ENCODE measurements at regions of chr6 and their contacts with region 1.

Region 1: DNA sequence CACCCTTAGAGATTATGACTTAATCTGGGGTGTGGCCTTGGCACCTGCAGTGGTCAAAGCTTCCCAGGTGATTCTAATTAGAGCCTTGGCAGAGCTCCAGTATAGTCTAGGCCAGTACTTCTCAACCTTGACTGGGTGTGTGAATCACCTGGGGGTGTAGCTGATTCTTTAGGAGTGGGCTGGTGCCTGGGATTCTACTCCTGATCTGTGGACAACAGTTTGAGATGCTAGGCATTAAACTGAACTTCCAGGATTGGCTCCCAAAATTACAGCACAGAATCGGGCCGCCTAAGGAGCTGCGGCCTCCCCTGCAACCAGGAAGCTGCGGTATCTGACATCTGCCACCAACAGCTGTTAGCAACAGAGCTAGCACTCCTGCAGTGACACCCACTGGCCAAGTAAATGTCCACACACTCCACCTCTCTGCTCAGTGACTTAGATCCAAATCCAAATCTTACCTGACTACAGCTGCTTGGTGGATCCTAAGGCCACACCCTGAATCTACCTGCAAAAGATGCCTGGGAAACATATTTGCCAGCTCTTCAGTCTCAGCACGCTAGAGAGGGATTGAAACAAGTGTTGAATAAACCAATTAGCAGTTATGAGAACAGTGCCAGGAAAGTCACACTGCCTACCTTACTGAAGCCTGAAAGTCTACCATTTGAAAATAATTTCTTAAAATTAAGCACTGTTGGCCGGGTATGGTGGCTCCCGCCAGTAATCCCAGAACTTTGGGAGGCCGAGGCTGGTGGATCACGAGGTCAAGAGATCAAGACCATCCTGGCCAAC is 126.7 kb downstream of the UNC5CL start:
- DNase-seq: peak in 1 of 2 experiments; percentile 17
- H3K4me3 ChIP-seq: no peak overlapping the region
- H3K27ac ChIP-seq: no peak overlapping the region
- H3K4me1 ChIP-seq: no peaks in the 10 kb centered on the region
- H3K27me3 ChIP-seq: peaks cover 0 to 1% (median 0%) of the 10 kb centered on the region in 4 experiments; a peak in 2 of 7 replicates
- CTCF ChIP-seq: peak; percentile 61 to 78 (median 67)
- EP300 ChIP-seq: no peak
- POLR2A ChIP-seq: no peak
- RAD21 ChIP-seq: peak; percentile 63 to 78

Region 2: DNA sequence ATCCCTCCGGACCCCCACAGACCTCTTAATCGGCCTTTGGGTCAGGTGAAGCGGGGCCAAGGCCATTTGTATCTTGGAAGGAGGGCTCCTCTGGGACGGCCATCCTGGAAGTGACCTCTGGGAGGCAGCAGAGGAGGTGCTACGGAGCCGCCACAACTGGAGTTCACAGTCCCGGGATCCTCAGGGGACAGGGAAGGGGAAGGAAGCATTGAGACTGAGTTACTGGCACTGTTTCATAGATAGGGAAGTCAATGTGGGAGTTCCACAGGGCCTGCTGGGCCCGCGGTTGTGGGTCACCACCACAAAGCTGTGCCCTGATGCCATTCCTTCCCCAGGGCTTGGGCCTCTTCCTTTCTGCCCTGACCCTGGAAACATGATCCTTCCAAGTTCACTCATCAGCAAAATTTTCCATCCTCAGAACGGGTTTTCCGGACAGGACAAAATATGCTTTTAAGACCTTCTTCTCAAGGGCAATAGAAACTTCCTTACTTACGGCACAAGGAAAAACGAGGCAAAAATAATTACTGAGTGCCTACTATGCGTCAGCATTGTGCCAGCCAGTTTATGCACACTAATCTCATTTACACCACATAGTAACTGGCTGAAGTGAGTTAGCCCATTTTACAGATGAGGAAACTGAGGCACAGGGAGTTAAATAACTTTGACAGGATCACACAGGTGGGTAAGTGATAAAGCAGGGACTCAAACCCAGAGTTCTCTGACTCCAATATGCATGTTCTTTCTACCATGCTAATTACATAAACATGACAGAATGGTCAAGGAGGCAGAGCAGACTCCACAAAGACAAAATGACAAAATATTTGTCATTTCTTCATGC is 17.2 kb before region 1 on chr6:
- CTCF ChIA-PET with region 1: interaction called, 55 read pairs
- POLR2A ChIA-PET with region 1: no interaction called
- DNase-seq: peak; percentile 46 to 85
- H3K4me3 ChIP-seq: no peak overlapping the region
- H3K27ac ChIP-seq: no peak overlapping the region
- H3K4me1 ChIP-seq: no peaks in the 10 kb centered on the region
- H3K27me3 ChIP-seq: no peaks in the 10 kb centered on the region; a peak in 2 of 7 replicates
- CTCF ChIP-seq: peak; percentile 81 to 91 (median 83)
- EP300 ChIP-seq: no peak
- POLR2A ChIP-seq: no peak
- RAD21 ChIP-seq: peak; percentile 94 to 95

Region 3: DNA sequence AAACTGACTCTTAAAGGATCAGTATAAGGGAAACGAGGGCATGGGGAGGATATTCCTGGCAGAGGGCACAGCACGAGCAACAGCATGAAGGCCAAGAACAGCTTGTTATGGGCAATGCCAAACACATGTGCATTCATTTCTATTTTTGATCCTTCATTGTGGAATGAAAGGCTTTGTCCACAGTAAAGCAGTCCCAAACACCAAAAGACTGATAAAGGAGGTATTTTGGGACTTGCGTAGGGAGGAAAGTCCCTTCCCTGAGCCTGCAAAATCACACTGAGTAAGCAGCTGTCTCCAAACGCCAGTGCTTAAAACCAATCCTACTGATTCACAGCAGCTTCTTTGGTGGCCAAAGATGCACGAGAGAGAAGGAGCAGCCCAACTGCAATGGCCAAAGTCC is 11.6 kb before region 1 on chr6:
- CTCF ChIA-PET with region 1: interaction called, 55 read pairs
- POLR2A ChIA-PET with region 1: interaction called, 3 read pairs
- DNase-seq: no peak
- H3K4me3 ChIP-seq: no peak overlapping the region
- H3K27ac ChIP-seq: no peak overlapping the region; the same call in 1 of the 2 replicates
- H3K4me1 ChIP-seq: no peaks in the 10 kb centered on the region
- H3K27me3 ChIP-seq: peaks cover 0 to 10% (median 6%) of the 10 kb centered on the region in 4 experiments; a peak in 4 of 7 replicates
- CTCF ChIP-seq: no peak
- EP300 ChIP-seq: no peak
- POLR2A ChIP-seq: no peak
- RAD21 ChIP-seq: no peak

Measured in H1 (cell line).